ENCODE measurements at regions of chr18 and their contacts with region 1.

Region 1: GRCh38 chr18:10787293-10787901 is 261.6 kb downstream of the NAPG start:
- DNase-seq: peak; percentile 80
- ATAC-seq: peak; percentile 72

Region 2: GRCh38 chr18:10750191-10751035 is 37.0 kb before region 1 on chr18:
- intact Hi-C with region 1: no loop called
- DNase-seq: no peak
- ATAC-seq: no peak

Region 3: GRCh38 chr18:10841203-10841602 is 53.8 kb after region 1 on chr18:
- intact Hi-C with region 1: loop called (anchors 10 kb)
- DNase-seq: peak; percentile 48
- ATAC-seq: peak; percentile 27

Region 4: GRCh38 chr18:11040823-11041656 is 253.6 kb after region 1 on chr18:
- intact Hi-C with region 1: loop called (anchors 10 kb)
- DNase-seq: no peak
- ATAC-seq: peak; percentile 59

Measured in Right ventricle myocardium superior (tissue), 1 donor.